ENCODE measurements at regions of chr3 and their contacts with region 1.

Region 1: GRCh38 chr3:58414538-58415197 is 19.0 kb downstream of the PDHB start:
- DNase-seq: peak; percentile 54 to 66
- H3K4me3 ChIP-seq: no peak overlapping the region
- H3K4me1 ChIP-seq: no peaks in the 10 kb centered on the region
- H3K27me3 ChIP-seq: no peaks in the 10 kb centered on the region

Region 2: GRCh38 chr3:58188173-58188564 is 226.5 kb before region 1 on chr3:
- in situ Hi-C with region 1: loop called (anchors 10 kb)
- DNase-seq: no peak
- H3K4me3 ChIP-seq: no peak overlapping the region
- H3K4me1 ChIP-seq: no peaks in the 10 kb centered on the region
- H3K27me3 ChIP-seq: no peaks in the 10 kb centered on the region

Region 3: DNA sequence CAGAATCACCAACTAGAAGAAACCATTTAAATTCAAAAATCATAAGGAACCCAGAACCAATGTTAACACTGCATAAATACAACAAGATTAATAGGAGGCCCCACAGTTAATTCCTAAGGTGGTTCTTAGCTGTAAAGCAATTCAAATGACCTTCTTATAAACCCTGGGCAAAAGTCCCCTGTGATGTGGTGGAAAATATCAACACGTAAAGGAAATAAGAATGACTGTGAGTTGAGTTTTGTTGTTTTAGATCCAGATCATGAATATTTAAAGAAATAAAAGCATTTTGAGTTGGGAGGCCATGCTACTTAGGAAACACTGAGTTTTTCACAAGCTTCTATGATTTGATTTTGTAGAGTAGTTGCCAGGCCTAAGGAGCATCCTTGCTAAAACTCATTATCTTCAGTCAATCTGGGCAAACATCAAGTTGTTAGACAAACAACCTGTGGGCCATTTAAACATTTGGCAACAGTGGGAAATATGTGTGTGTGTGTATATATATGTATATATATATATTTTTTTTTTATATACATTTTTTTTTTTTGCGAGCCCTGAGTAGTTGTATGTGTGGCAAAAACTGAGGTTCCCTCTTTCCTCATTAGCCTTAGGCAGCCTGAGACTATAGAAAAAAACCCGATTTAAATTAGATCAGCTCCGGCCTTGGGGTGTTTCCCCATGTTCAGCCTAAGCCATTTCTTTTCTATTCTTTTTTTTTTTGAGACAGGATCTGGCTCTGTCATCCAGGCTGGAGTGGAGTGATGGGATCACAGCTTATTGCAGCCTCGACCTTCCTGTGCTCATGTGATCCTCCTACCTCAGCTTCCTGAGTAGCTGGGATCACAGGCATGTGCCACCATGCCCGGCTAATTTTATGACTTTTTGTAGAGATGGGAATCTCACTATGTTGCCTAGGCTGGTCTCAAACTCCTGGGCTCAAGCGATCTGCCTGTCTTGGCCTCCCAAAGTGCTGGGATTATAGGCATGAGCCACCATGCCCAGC is 90.0 kb before region 1 on chr3:
- in situ Hi-C with region 1: loop called (anchors 5 kb)
- DNase-seq: no peak
- H3K4me3 ChIP-seq: no peak overlapping the region
- H3K4me1 ChIP-seq: no peaks in the 10 kb centered on the region; the same call in 1 of the 2 replicates
- H3K27me3 ChIP-seq: no peaks in the 10 kb centered on the region

Region 4: DNA sequence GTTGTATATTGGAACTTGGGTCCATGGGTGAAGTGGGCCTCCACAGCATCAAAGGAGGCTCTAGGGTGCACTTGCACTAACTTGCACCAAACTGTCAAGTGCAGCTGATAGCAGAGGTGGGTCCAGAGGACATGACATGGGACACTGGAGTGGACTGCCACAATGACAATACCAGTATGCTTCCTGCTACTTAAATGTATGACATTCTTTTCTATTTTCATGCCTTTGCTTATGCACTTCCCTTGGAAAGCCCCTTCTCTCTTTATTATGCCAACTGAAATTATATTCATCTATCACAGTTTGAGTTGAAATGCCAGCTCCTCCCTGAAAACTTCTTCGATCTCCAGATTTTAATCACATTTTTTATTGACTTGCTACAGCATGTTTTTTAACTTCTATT is 533.4 kb after region 1 on chr3:
- in situ Hi-C with region 1: no loop called
- DNase-seq: no peak
- H3K4me3 ChIP-seq: no peak overlapping the region
- H3K4me1 ChIP-seq: no peaks in the 10 kb centered on the region
- H3K27me3 ChIP-seq: no peaks in the 10 kb centered on the region